Activated T-helper 2 cell treated with anti-CD3 and anti-CD28 coated beads, Interferon-gamma antibody, Interleukin-2, Interleukin-4, amounts not matched to agents 10 μg/mL and 5 μg/mL and 100 μg/mL, durations not matched to agents 14 hours and 24 hours and 36 hours (primary cell): ENCODE measurements at regions of chr12 and their contacts with region 1.

Region 1: DNA sequence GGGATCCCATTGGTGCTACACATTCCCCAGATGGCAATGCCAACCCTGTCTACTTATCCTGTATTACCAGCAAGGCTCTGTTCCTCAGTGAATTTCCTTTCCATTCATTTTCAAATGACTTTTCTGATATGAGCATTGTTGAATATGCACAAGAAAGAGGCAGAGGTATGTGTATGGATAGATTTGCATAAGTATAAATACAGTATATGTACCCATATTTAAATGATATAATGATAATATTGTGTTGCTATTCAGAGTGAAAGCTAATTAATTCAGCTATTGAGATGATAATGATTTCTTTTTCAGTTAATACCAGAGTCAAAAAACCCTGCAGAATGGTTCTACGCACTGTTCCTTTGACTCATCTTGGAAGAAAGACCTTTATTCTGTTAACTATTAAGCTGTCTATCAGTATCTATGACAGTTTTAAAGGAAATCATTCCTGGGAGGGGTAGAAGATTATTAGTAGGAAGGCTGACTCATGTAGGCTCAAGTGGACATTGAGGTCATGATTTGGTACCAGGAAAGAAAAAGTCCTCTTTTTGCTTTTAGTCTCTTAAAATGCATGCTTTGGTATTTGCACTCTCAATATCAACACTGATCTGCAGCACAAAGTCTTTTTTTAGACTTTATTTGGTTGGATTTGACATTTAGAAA is 44.9 kb upstream of the GAS2L3 start:
- DNase-seq: no peak
- H3K4me3 Mint-ChIP-seq: no peak overlapping the region
- H3K27ac Mint-ChIP-seq: no peak overlapping the region
- H3K4me1 Mint-ChIP-seq: no peaks in the 10 kb centered on the region
- H3K27me3 Mint-ChIP-seq: no peaks in the 10 kb centered on the region

Region 2: GRCh38 chr12:100545092-100545491 is 16.5 kb after region 1 on chr12:
- intact Hi-C with region 1: loop called (anchors 1 kb)
- DNase-seq: no peak
- H3K4me3 Mint-ChIP-seq: no peak overlapping the region
- H3K27ac Mint-ChIP-seq: no peak overlapping the region
- H3K4me1 Mint-ChIP-seq: peaks cover 2% of the 10 kb centered on the region
- H3K27me3 Mint-ChIP-seq: no peaks in the 10 kb centered on the region